Aorta (tissue), 5 donors: ENCODE measurements at regions of chr3 and their contacts with region 1.

Region 1: GRCh38 chr3:179071550-179072397 is at the start of gene ZMAT3:
- DNase-seq: peak; percentile 92 to 96
- ATAC-seq: peak; percentile 93
- H3K4me3 ChIP-seq: peak within 1 kb of the TSS; percentile 78 to 92
- H3K27ac ChIP-seq: peak within 1 kb of the TSS; percentile 47 to 95
- H3K4me1 ChIP-seq: no peaks in the 10 kb centered on the region
- H3K27me3 ChIP-seq: no peaks in the 10 kb centered on the region
- total RNA-seq, gene ZMAT3: 27.1 to 27.3 TPM

Region 2: DNA sequence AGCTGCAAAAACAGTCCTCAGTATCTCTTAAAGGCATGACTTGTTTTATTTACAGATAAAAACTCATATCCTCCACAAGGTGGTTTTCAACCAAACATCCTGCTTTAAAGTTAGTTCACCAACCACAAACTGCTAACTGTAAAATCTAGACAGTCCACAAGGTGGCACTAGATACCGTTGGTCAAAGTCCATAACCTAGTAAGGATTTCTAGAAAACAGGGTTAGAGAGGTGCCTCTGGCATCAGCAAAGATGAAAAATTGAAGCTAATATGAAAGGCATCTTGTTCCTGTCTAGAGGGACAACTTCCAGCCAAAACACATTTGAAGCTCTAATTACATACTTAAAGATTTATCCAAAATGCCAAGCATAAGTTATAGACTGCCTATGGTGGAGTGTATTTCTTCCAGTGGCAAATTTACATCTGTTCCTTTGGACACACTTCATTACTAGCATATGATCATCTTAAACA is 56.2 kb before region 1 on chr3:
- intact Hi-C with region 1: loop called (anchors 10 kb)
- DNase-seq: no peak
- ATAC-seq: peak; percentile 92
- H3K4me3 ChIP-seq: no peak overlapping the region
- H3K27ac ChIP-seq: no peak overlapping the region
- H3K4me1 ChIP-seq: peaks cover 0 to 2% of the 10 kb centered on the region in 2 donors
- H3K27me3 ChIP-seq: no peaks in the 10 kb centered on the region

Region 3: GRCh38 chr3:179037351-179037750 is 34.4 kb before region 1 on chr3:
- intact Hi-C with region 1: loop called in 1 of 2 experiments (anchors 5 kb)
- DNase-seq: peak; percentile 84 to 88
- ATAC-seq: peak; percentile 74
- H3K4me3 ChIP-seq: no peak overlapping the region
- H3K27ac ChIP-seq: no peak overlapping the region
- H3K4me1 ChIP-seq: no peaks in the 10 kb centered on the region
- H3K27me3 ChIP-seq: no peaks in the 10 kb centered on the region